ENCODE measurements at regions of chr12 and their contacts with region 1.

Region 1: DNA sequence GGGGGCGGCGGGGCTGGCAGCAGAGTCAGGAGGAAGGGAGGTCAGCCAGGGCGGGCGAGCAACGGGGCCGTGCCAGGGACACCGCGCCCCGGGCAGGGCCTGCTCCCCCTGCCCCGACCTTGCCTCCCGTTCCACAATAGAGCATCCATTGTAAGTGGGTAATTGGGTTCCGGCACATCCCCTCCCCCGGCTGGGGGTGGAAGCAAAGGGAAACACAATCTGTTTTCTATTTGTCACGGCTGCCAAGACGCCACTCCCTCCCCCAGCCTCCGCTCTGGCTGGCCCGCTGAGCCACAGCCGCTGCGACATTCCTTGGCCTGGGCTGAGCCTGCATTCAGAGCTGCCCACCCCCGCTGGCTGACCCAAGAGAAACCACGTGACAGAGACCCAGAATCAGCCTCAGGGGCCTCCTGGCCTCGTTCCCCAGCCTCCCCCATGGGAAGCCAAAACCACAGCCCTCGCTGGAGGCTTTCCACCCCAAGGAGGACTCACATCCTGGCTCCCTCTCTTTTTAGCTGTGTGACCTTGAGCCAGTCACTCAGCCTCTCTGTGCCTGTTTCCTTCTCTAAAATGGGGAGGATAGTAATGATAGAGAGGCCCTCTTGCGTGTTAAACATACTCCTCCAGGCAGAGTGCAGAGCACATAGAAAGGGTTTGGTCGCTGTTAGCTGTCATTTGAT is 117.6 kb downstream of the SCARB1 start:
- DNase-seq: peak; percentile 91 to 99 (median 94)

Region 2: DNA sequence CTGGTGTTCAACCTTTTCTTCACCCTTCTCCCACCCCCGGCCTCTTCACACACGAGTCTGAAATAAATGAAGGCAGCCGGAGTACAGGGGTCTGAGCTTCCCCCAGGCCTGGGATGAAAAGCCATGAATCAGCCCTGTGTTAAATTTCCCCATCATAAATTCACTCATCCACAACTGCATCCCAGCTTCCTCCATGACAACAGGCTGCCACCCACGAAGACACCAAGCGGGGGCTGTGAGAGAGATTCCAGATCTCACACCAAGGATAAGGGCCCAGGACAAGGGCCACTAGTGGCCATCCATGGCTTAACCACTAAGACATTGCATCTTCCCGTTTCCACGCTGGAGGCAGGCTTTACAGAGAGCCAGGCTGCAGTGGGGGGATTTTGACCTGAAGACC is 84.7 kb before region 1 on chr12:
- intact Hi-C with region 1: loop called (anchors 5 kb)
- DNase-seq: peak in 3 of 10 donors; percentile 26 to 89 (median 35)

Region 3: DNA sequence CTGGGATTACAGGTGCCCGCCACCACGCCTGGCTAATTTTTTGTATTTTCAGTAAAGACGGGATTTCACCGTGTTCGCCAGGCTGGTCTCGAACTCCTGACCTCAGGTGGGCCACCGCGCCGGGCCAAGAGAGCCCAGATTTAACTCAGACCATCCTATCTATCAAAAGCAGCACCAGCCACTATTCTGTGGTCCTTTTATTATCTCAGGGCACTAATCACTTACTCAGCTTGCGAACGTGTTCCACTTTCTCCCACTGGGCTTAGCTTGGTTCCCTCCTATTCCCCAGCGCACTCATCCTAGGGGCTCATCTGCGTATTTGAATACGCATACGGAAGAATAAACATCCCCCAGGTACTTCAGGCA is 303.0 kb after region 1 on chr12:
- intact Hi-C with region 1: no loop called
- DNase-seq: no peak

Measured in posterior cingulate gyrus (tissue), 11 donors.